Aorta (tissue), 5 donors: ENCODE measurements at regions of chr4 and their contacts with region 1.

Region 1: GRCh38 chr4:109433205-109434006 is at the start of gene SEC24B:
- DNase-seq: peak; percentile 95 to 96
- ATAC-seq: peak; percentile 94
- H3K4me3 ChIP-seq: peak within 1 kb of the TSS; percentile 89 to 91
- H3K27ac ChIP-seq: peak within 1 kb of the TSS; percentile 23 to 77
- H3K4me1 ChIP-seq: peaks cover 0 to 5% of the 10 kb centered on the region in 2 donors
- H3K27me3 ChIP-seq: no peaks in the 10 kb centered on the region
- total RNA-seq, gene SEC24B: 35.6 to 40.8 TPM

Region 2: GRCh38 chr4:109486007-109486406 is 52.6 kb after region 1 on chr4:
- intact Hi-C with region 1: loop called in 1 of 2 experiments (anchors 10 kb)
- DNase-seq: no peak
- ATAC-seq: no peak
- H3K4me3 ChIP-seq: no peak overlapping the region
- H3K27ac ChIP-seq: no peak overlapping the region
- H3K4me1 ChIP-seq: no peaks in the 10 kb centered on the region
- H3K27me3 ChIP-seq: no peaks in the 10 kb centered on the region

Region 3: GRCh38 chr4:109559983-109560686 is 126.7 kb after region 1 on chr4 and contains the start of gene MCUB:
- intact Hi-C with region 1: loop called in 1 of 2 experiments (anchors 10 kb)
- DNase-seq: peak; percentile 93 to 95
- ATAC-seq: peak; percentile 95
- H3K4me3 ChIP-seq: peak within 1 kb of the TSS; percentile 50 to 77
- H3K27ac ChIP-seq: no peak within 1 kb of the TSS
- H3K4me1 ChIP-seq: no peaks in the 10 kb centered on the region
- H3K27me3 ChIP-seq: no peaks in the 10 kb centered on the region
- total RNA-seq, gene MCUB: 12.5 to 25.6 TPM

Region 4: DNA sequence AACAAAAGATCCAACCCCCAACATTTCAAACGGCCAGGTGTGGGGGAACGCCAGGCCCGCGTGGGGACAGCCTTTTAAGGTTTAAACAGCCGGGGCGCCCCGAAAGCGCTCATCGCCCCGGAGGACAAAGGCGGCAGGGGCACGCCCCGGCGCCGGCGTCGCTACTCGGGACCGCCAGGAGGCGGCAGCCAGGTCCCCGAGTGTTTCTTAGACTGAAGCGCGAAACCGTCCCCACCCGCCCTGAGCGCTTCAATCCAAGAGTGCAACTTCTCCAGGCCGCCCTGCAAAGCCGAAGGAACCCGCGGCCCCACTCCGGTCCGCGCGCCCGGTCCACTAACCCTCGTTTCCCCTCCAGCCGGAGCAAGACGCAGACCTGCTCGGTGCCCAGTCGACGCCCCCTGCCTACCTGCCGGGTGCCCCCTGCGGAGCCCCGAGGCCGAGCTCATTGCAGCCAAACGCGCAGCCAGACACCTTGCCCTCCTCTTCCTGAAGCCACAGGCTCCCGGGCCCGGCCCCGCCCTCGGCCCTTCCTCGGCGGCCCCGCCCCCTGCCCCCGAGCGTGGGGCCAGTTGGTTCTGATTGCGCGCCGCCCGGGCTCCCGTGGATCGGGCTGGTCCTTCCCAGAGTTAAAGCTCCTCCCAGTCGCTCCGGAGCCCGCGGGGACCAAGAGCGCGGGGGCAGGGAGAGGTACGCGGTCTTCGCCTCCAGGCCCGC is 269.7 kb after region 1 on chr4 and contains the start of gene CASP6:
- intact Hi-C with region 1: loop called in 1 of 2 experiments (anchors 10 kb)
- DNase-seq: peak; percentile 92 to 94
- ATAC-seq: peak; percentile 96
- H3K4me3 ChIP-seq: peak within 1 kb of the TSS; percentile 87 to 91
- H3K27ac ChIP-seq: peak within 1 kb of the TSS in 1 of 2 donors; percentile 35
- H3K4me1 ChIP-seq: peaks cover 0 to 7% of the 10 kb centered on the region in 2 donors
- H3K27me3 ChIP-seq: no peaks in the 10 kb centered on the region
- total RNA-seq, gene CASP6: 11.1 to 19.3 TPM

Region 5: GRCh38 chr4:109815151-109816081 is 382.0 kb after region 1 on chr4 and contains the start of gene GAR1:
- intact Hi-C with region 1: loop called (anchors 5 kb)
- DNase-seq: peak; percentile 92 to 94
- ATAC-seq: peak; percentile 98
- H3K4me3 ChIP-seq: peak within 1 kb of the TSS; percentile 51 to 57
- H3K27ac ChIP-seq: peak within 1 kb of the TSS in 1 of 2 donors; percentile 23
- H3K4me1 ChIP-seq: no peaks in the 10 kb centered on the region
- H3K27me3 ChIP-seq: no peaks in the 10 kb centered on the region
- total RNA-seq, gene GAR1: 9.8 to 11.3 TPM